ENCODE measurements at regions of chr6 and their contacts with region 1.

Region 1: DNA sequence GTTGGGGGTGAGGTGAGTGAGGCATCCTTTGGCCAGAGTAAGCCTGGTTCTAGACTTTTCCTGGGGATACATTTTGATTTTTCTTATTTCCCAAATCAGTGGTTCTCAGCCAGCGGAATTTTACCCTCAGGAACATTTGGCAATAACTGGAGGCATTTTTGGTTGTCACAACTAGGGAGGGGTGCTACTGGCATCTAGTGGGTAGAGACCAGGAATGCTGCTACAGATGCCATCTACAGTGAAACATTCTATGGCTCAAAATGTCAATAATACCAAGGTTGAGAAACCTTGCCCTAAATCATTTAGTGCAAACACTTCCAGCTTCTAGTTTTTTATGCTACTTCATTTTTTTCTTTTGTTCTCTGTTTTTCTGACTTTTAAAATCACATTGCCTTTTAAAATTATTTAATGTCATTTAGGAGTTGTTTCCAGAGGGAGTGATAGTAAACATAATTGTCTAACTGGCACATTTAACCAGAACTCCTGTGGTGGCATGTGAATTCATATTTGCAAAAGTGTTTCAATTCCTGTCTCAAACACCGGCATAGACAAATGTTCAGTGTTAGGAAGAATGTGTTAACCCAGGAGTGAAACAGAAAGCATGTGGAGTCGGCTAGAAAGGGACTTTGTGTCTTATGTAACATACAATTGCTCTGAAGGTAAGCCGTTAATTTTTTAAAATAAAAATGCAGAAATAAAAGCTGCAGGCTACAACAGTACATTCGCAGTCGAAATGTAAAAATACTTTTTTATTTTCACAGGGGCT is 59.0 kb downstream of the QRSL1 start:
- DNase-seq: no peak
- ATAC-seq: no peak

Region 2: DNA sequence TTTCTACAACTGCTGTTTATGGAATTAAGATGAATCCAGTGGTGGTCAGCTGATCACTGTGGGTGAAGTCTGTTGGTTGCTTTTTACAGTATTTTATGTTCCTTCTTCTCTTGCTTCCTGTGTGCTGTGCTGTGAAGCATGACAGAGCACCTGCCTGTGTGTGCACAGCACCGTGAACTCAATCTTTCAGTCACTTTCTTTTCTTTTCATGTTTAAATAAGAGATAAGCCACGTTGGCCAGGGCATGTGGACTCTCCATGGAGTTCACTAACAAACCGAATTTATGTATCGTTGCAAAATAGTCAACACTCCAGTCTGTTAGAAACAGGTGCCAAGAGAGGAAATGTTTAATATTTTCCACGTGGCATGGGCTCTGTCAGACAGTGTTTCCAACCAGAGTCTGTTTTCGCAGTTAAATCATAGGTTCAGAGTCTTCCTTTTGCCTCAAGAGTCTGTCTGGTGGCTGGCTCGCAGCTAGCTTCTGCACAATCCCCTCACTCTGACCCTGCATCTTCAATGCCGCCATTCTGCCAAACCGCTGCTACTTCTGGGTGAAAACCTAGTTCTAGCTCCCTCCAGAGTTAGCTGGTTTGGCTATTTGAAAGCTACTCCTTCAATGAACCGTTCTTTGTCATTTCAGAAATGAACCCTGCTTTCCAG is 14.2 kb after region 1 on chr6:
- intact Hi-C with region 1: loop called (anchors 2 kb)
- DNase-seq: no peak
- ATAC-seq: no peak

Measured in sciatic nerve (tissue), 2 donors.